CD8-positive, alpha-beta memory T cell (primary cell): ENCODE measurements at regions of chr12 and their contacts with region 1.

Region 1: GRCh38 chr12:56333679-56334489 is at the start of gene PAN2:
- DNase-seq: peak; percentile 88 to 95 (median 94)
- H3K4me3 ChIP-seq: peak within 1 kb of the TSS; percentile 94
- H3K4me3 Mint-ChIP-seq: peak within 1 kb of the TSS; percentile 96 to 99 (median 97)
- H3K27ac ChIP-seq: peak within 1 kb of the TSS; percentile 99
- H3K27ac Mint-ChIP-seq: peak within 1 kb of the TSS; percentile 100
- H3K4me1 ChIP-seq: peaks cover 30% of the 10 kb centered on the region
- H3K4me1 Mint-ChIP-seq: peaks cover 30 to 53% (median 49%) of the 10 kb centered on the region in 3 donors
- H3K27me3 ChIP-seq: no peaks in the 10 kb centered on the region
- H3K27me3 Mint-ChIP-seq: peaks cover 0 to 5% of the 10 kb centered on the region in 2 donors
- total RNA-seq, gene PAN2: 36.6 to 40.4 TPM

Region 2: DNA sequence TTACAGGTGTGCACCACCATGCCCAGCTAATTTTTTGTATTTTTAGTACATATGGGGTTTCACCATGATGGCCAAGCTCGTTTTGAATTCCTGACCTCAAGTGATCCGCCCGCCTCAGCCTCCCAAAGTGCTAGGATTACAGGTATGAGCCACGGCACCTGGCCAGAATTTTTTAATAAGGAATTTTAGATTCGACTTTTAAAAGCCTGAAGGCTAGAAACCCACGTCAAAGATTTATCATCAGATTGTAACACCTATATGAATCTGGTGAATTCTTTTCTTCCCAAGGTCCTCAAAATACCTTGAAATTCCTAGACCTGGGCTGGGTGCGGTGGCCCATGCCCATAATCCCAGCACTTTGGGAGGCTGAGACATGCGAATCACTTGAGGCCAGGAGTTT is 472.5 kb before region 1 on chr12:
- CTCF ChIA-PET with region 1: no interaction called
- POLR2A ChIA-PET with region 1: no interaction called
- DNase-seq: no peak
- H3K4me3 ChIP-seq: no peak overlapping the region
- H3K4me3 Mint-ChIP-seq: no peak overlapping the region
- H3K27ac ChIP-seq: no peak overlapping the region
- H3K27ac Mint-ChIP-seq: no peak overlapping the region
- H3K4me1 ChIP-seq: no peaks in the 10 kb centered on the region
- H3K4me1 Mint-ChIP-seq: no peaks in the 10 kb centered on the region
- H3K27me3 ChIP-seq: no peaks in the 10 kb centered on the region
- H3K27me3 Mint-ChIP-seq: peaks cover 0 to 3% of the 10 kb centered on the region in 2 donors

Region 3: GRCh38 chr12:56359851-56360767 is 26.2 kb after region 1 on chr12 and contains the start of gene STAT2:
- CTCF ChIA-PET with region 1: interaction called, 49 read pairs
- POLR2A ChIA-PET with region 1: interaction called, 49 read pairs
- DNase-seq: peak; percentile 99 to 100 (median 99)
- H3K4me3 ChIP-seq: peak within 1 kb of the TSS; percentile 96
- H3K4me3 Mint-ChIP-seq: peak within 1 kb of the TSS; percentile 90 to 99 (median 96)
- H3K27ac ChIP-seq: peak within 1 kb of the TSS; percentile 91
- H3K27ac Mint-ChIP-seq: peak within 1 kb of the TSS; percentile 61 to 98 (median 96)
- H3K4me1 ChIP-seq: peaks cover 28% of the 10 kb centered on the region
- H3K4me1 Mint-ChIP-seq: peaks cover 26 to 45% (median 33%) of the 10 kb centered on the region in 3 donors
- H3K27me3 ChIP-seq: no peaks in the 10 kb centered on the region
- H3K27me3 Mint-ChIP-seq: no peaks in the 10 kb centered on the region
- total RNA-seq, gene STAT2: 61.6 to 63.5 TPM

Region 4: DNA sequence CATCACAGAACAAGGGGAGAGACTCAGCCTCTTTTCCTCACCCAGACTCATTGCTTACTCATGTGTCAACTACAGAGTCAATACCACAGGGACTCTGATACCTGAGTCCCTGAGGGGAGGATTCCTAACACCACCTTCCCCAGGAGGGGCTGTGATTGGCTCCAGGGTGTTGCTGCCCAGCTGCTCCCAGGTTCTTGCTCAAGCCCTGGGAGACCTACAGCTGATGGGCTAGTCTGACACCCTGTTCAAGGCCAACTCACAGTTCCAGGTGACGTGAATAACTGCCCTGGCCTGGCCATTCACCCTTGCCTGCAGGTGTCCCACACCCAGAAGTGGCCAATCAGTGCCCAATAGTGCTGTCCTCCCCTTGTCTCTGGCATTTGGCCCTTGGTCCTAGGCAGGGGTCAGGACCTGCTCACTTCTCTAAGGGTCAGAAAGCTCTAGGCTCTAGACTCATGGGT is 143.1 kb after region 1 on chr12:
- CTCF ChIA-PET with region 1: no interaction called
- POLR2A ChIA-PET with region 1: no interaction called
- DNase-seq: no peak
- H3K4me3 ChIP-seq: no peak overlapping the region
- H3K4me3 Mint-ChIP-seq: no peak overlapping the region
- H3K27ac ChIP-seq: no peak overlapping the region
- H3K27ac Mint-ChIP-seq: peak overlapping the region in 4 of 8 donors; percentile 17 to 43 (median 18)
- H3K4me1 ChIP-seq: no peaks in the 10 kb centered on the region
- H3K4me1 Mint-ChIP-seq: peaks cover 0 to 8% (median 2%) of the 10 kb centered on the region in 3 donors
- H3K27me3 ChIP-seq: no peaks in the 10 kb centered on the region
- H3K27me3 Mint-ChIP-seq: no peaks in the 10 kb centered on the region